B cell (primary cell): ENCODE measurements at regions of chr11 and their contacts with region 1.

Region 1: GRCh38 chr11:59053387-59053786 is 32.7 kb upstream of the GLYATL1B start:
- DNase-seq: peak; percentile 77
- ATAC-seq: no peak
- H3K4me3 ChIP-seq: no peak overlapping the region
- H3K4me3 Mint-ChIP-seq: peak overlapping the region; percentile 36
- H3K27ac ChIP-seq: no peak overlapping the region
- H3K27ac Mint-ChIP-seq: no peak overlapping the region
- H3K4me1 ChIP-seq: peaks cover 58 to 66% of the 10 kb centered on the region in 2 donors
- H3K4me1 Mint-ChIP-seq: peaks cover 68% of the 10 kb centered on the region
- H3K27me3 ChIP-seq: no peaks in the 10 kb centered on the region
- H3K27me3 Mint-ChIP-seq: no peaks in the 10 kb centered on the region
- CTCF ChIP-seq: peak; percentile 73

Region 2: GRCh38 chr11:58579192-58580129 is 473.9 kb before region 1 on chr11:
- CTCF ChIA-PET with region 1: interaction called, 5 read pairs
- POLR2A ChIA-PET with region 1: interaction called, 4 read pairs
- intact Hi-C with region 1: loop called (anchors 2 kb)
- DNase-seq: peak; percentile 96
- ATAC-seq: peak; percentile 37
- H3K4me3 ChIP-seq: peak overlapping the region; percentile 71 to 100 (median 99)
- H3K4me3 Mint-ChIP-seq: peak overlapping the region; percentile 97
- H3K27ac ChIP-seq: peak overlapping the region; percentile 89 to 100
- H3K27ac Mint-ChIP-seq: peak overlapping the region; percentile 100
- H3K4me1 ChIP-seq: peaks cover 48 to 52% of the 10 kb centered on the region in 2 donors
- H3K4me1 Mint-ChIP-seq: peaks cover 64% of the 10 kb centered on the region
- H3K27me3 ChIP-seq: no peaks in the 10 kb centered on the region
- H3K27me3 Mint-ChIP-seq: no peaks in the 10 kb centered on the region
- CTCF ChIP-seq: peak; percentile 79

Region 3: GRCh38 chr11:58711832-58712231 is 341.6 kb before region 1 on chr11:
- CTCF ChIA-PET with region 1: no interaction called
- POLR2A ChIA-PET with region 1: no interaction called
- intact Hi-C with region 1: no loop called
- DNase-seq: no peak
- ATAC-seq: no peak
- H3K4me3 ChIP-seq: no peak overlapping the region
- H3K4me3 Mint-ChIP-seq: no peak overlapping the region
- H3K27ac ChIP-seq: no peak overlapping the region
- H3K27ac Mint-ChIP-seq: no peak overlapping the region
- H3K4me1 ChIP-seq: no peaks in the 10 kb centered on the region
- H3K4me1 Mint-ChIP-seq: no peaks in the 10 kb centered on the region
- H3K27me3 ChIP-seq: no peaks in the 10 kb centered on the region
- H3K27me3 Mint-ChIP-seq: peaks cover 3% of the 10 kb centered on the region
- CTCF ChIP-seq: no peak

Region 4: DNA sequence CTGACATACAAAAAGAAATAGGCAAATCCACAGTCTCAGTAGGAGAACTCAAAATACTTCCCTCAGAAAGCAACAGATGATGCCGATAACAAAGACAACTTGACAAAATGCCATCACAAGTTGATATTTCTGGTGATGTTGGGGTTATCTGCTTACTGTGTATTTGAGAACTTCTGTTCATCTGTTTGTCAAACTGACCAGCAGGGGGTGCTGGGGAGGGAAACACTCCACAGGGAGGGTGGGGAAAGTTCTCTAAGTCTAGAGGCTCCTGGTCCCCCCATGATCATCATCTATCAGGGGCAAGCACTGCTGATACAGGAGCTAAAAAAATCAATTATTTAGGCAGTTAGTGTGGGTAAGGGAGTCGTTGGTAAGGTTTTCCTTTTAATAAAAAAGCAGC is 94.9 kb before region 1 on chr11:
- CTCF ChIA-PET with region 1: interaction called, 76 read pairs
- POLR2A ChIA-PET with region 1: no interaction called
- intact Hi-C with region 1: loop called (anchors 1 kb)
- DNase-seq: peak; percentile 80
- ATAC-seq: peak; percentile 81
- H3K4me3 ChIP-seq: no peak overlapping the region
- H3K4me3 Mint-ChIP-seq: no peak overlapping the region
- H3K27ac ChIP-seq: no peak overlapping the region
- H3K27ac Mint-ChIP-seq: no peak overlapping the region
- H3K4me1 ChIP-seq: peaks cover 0 to 4% of the 10 kb centered on the region in 2 donors
- H3K4me1 Mint-ChIP-seq: peaks cover 4% of the 10 kb centered on the region
- H3K27me3 ChIP-seq: no peaks in the 10 kb centered on the region
- H3K27me3 Mint-ChIP-seq: no peaks in the 10 kb centered on the region
- CTCF ChIP-seq: peak; percentile 81

Region 5: DNA sequence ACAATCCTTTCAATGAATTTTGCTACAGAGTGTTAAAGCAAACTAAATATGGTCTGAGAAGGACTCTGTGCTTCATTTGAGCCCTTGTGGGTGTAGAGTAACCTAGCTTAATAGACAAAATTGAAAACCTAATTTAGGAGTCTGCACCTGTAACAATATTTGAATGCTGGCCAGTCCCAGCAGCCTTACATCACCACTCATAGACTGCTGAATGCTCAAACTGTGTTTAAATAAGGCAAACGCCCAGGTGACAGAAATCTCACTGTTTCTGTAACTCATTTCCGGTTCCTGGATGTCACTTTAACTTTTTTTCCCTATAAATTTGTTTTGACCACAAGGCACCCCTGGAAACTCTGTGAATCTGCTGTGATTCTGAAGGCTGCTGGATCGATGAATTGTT is 12.8 kb before region 1 on chr11:
- CTCF ChIA-PET with region 1: no interaction called
- POLR2A ChIA-PET with region 1: no interaction called
- intact Hi-C with region 1: no loop called
- DNase-seq: no peak
- ATAC-seq: no peak
- H3K4me3 ChIP-seq: no peak overlapping the region
- H3K4me3 Mint-ChIP-seq: no peak overlapping the region
- H3K27ac ChIP-seq: no peak overlapping the region
- H3K27ac Mint-ChIP-seq: no peak overlapping the region
- H3K4me1 ChIP-seq: peaks cover 0 to 3% of the 10 kb centered on the region in 2 donors
- H3K4me1 Mint-ChIP-seq: peaks cover 18% of the 10 kb centered on the region
- H3K27me3 ChIP-seq: no peaks in the 10 kb centered on the region
- H3K27me3 Mint-ChIP-seq: no peaks in the 10 kb centered on the region
- CTCF ChIP-seq: no peak

Region 6: GRCh38 chr11:59088162-59088561 is 34.8 kb after region 1 on chr11:
- CTCF ChIA-PET with region 1: interaction called, 50 read pairs
- POLR2A ChIA-PET with region 1: interaction called, 5 read pairs
- intact Hi-C with region 1: no loop called
- DNase-seq: peak; percentile 66
- ATAC-seq: peak; percentile 88
- H3K4me3 ChIP-seq: no peak overlapping the region
- H3K4me3 Mint-ChIP-seq: peak overlapping the region; percentile 8
- H3K27ac ChIP-seq: peak overlapping the region; percentile 16 to 73
- H3K27ac Mint-ChIP-seq: peak overlapping the region; percentile 59
- H3K4me1 ChIP-seq: peaks cover 30 to 38% of the 10 kb centered on the region in 2 donors
- H3K4me1 Mint-ChIP-seq: peaks cover 45% of the 10 kb centered on the region
- H3K27me3 ChIP-seq: no peaks in the 10 kb centered on the region
- H3K27me3 Mint-ChIP-seq: no peaks in the 10 kb centered on the region
- CTCF ChIP-seq: no peak

Region 7: GRCh38 chr11:59135648-59136461 is 82.5 kb after region 1 on chr11:
- CTCF ChIA-PET with region 1: interaction called, 64 read pairs
- POLR2A ChIA-PET with region 1: interaction called, 10 read pairs
- intact Hi-C with region 1: loop called (anchors 1 kb)
- DNase-seq: peak; percentile 90
- ATAC-seq: peak; percentile 99
- H3K4me3 ChIP-seq: peak overlapping the region in 1 of 5 experiments; percentile 18
- H3K4me3 Mint-ChIP-seq: peak overlapping the region; percentile 62
- H3K27ac ChIP-seq: no peak overlapping the region
- H3K27ac Mint-ChIP-seq: peak overlapping the region; percentile 88
- H3K4me1 ChIP-seq: peaks cover 14 to 23% of the 10 kb centered on the region in 2 donors
- H3K4me1 Mint-ChIP-seq: peaks cover 31% of the 10 kb centered on the region
- H3K27me3 ChIP-seq: no peaks in the 10 kb centered on the region
- H3K27me3 Mint-ChIP-seq: no peaks in the 10 kb centered on the region
- CTCF ChIP-seq: peak; percentile 98

Region 8: DNA sequence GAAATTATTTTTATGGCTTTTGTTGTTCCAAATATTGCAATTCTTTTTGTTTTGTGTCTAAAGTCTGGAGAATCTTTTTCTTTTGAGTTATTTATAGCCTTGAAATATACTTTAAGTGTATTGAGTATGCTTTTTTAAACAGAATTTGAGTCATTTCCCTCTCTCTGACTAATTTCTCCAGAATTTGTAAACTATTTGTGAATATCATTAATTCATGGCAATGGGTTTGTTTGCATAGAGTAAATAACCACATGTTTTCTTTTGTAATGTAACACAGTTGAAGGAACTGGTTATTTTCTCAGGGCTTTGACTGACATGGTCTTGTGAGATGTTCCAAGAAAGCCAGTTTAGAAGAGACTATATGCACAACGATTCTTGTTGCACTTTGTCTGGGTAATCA is 190.2 kb after region 1 on chr11:
- CTCF ChIA-PET with region 1: no interaction called
- POLR2A ChIA-PET with region 1: no interaction called
- intact Hi-C with region 1: no loop called
- DNase-seq: no peak
- ATAC-seq: no peak
- H3K4me3 ChIP-seq: no peak overlapping the region
- H3K4me3 Mint-ChIP-seq: no peak overlapping the region
- H3K27ac ChIP-seq: no peak overlapping the region
- H3K27ac Mint-ChIP-seq: no peak overlapping the region
- H3K4me1 ChIP-seq: peaks cover 0 to 4% of the 10 kb centered on the region in 2 donors
- H3K4me1 Mint-ChIP-seq: peaks cover 11% of the 10 kb centered on the region
- H3K27me3 ChIP-seq: no peaks in the 10 kb centered on the region
- H3K27me3 Mint-ChIP-seq: no peaks in the 10 kb centered on the region
- CTCF ChIP-seq: no peak

Region 9: DNA sequence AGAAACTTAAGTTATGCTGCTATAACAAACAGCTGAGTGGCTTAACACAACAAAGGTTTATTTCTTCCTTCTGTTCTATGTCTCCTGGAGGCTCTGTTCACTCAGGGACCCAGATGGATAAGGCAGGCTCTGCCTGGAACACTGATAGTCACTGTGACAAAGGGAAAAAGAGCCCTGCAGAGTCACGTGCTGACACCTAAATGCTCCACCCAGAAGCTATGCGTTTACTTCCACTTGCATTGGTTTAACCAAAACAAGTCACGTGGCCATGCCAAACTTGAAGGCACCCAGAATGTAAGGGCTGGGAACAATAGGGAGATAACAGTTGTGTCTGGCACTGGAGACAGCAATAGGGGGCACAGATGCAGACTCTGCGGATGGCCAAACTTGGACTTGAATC is 1699.9 kb after region 1 on chr11:
- CTCF ChIA-PET with region 1: no interaction called
- POLR2A ChIA-PET with region 1: no interaction called
- intact Hi-C with region 1: no loop called
- DNase-seq: no peak
- ATAC-seq: no peak
- H3K4me3 ChIP-seq: no peak overlapping the region
- H3K4me3 Mint-ChIP-seq: no peak overlapping the region
- H3K27ac ChIP-seq: no peak overlapping the region
- H3K27ac Mint-ChIP-seq: no peak overlapping the region
- H3K4me1 ChIP-seq: no peaks in the 10 kb centered on the region
- H3K4me1 Mint-ChIP-seq: no peaks in the 10 kb centered on the region
- H3K27me3 ChIP-seq: peaks cover 0 to 13% (median 0%) of the 10 kb centered on the region in 4 experiments
- H3K27me3 Mint-ChIP-seq: peaks cover 32% of the 10 kb centered on the region
- CTCF ChIP-seq: no peak